Activated T-helper 2 cell treated with anti-CD3 and anti-CD28 coated beads, Interferon-gamma antibody, Interleukin-2, Interleukin-4, amounts not matched to agents 10 μg/mL and 5 μg/mL and 100 μg/mL, durations not matched to agents 14 hours and 24 hours and 36 hours (primary cell): ENCODE measurements at regions of chr4 and their contacts with region 1.

Region 1: DNA sequence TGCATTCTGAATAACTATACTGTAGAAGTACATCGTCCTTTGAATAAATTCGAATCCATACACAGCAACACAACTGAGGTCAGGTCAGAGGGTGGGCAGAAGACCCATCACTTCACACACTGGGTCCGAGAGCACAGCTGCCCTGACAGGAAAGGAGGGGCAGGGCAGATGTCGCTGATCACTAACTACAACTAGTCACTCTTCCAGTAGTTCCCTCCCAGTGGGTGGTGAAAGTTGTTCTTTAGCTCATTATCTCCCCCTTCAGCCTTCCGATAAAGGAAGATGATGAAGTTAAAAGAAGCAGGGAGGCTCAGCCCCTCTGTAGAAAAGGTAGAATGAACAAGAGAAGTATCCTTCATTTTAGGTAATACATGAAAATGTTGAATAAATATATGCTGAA is 278.9 kb downstream of the INPP4B start:
- DNase-seq: peak; percentile 53
- H3K4me3 Mint-ChIP-seq: peak overlapping the region; percentile 88
- H3K27ac Mint-ChIP-seq: peak overlapping the region; percentile 94
- H3K4me1 Mint-ChIP-seq: peaks cover 55% of the 10 kb centered on the region
- H3K27me3 Mint-ChIP-seq: no peaks in the 10 kb centered on the region

Region 2: GRCh38 chr4:141220655-141221605 is 1346.3 kb before region 1 on chr4 and contains the start of gene ZNF330:
- intact Hi-C with region 1: loop called (anchors 10 kb)
- DNase-seq: peak; percentile 82
- H3K4me3 Mint-ChIP-seq: peak within 1 kb of the TSS; percentile 91
- H3K27ac Mint-ChIP-seq: peak within 1 kb of the TSS; percentile 95
- H3K4me1 Mint-ChIP-seq: peaks cover 29% of the 10 kb centered on the region
- H3K27me3 Mint-ChIP-seq: peaks cover 9% of the 10 kb centered on the region
- total RNA-seq, gene ZNF330: 55.3 and 57.9 TPM in 2 replicates

Region 3: DNA sequence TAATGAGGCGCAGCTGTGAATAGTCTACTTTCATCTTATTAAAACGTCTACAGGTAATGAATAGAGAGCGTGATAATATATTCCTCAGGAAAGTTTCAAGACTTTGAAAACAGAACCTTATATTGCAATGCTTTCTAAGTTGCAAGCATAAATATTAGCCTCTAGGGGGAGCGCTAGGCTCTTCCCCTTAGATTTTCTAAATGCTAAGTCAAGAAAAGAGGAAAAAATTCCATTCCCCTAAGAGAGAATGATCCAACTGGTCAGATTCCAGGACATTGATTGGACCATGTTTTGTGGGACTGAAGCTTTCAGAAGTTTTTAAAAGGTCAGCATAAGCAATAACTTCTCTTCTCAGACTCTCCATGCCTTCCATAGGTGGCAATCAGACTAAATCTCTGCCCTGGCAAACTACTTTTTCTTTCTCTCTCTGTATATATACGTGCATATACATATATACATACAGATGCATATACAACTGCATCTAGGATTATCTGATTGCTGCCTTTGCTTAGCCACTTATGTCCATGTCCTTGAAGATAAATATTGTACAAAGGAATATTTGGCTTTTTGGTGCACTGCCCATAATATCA is 214.0 kb before region 1 on chr4:
- intact Hi-C with region 1: loop called (anchors 1 kb)
- DNase-seq: no peak
- H3K4me3 Mint-ChIP-seq: peak overlapping the region; percentile 15
- H3K27ac Mint-ChIP-seq: peak overlapping the region; percentile 88
- H3K4me1 Mint-ChIP-seq: peaks cover 89% of the 10 kb centered on the region
- H3K27me3 Mint-ChIP-seq: no peaks in the 10 kb centered on the region

Region 4: GRCh38 chr4:142405021-142405694 is 162.0 kb before region 1 on chr4:
- intact Hi-C with region 1: loop called (anchors 1 kb)
- DNase-seq: peak; percentile 64
- H3K4me3 Mint-ChIP-seq: peak overlapping the region; percentile 96
- H3K27ac Mint-ChIP-seq: peak overlapping the region; percentile 99
- H3K4me1 Mint-ChIP-seq: peaks cover 45% of the 10 kb centered on the region
- H3K27me3 Mint-ChIP-seq: no peaks in the 10 kb centered on the region

Region 5: GRCh38 chr4:142556048-142556447 is 11.2 kb before region 1 on chr4:
- intact Hi-C with region 1: loop called (anchors 1 kb)
- DNase-seq: no peak
- H3K4me3 Mint-ChIP-seq: peak overlapping the region; percentile 63
- H3K27ac Mint-ChIP-seq: peak overlapping the region; percentile 82
- H3K4me1 Mint-ChIP-seq: peaks cover 67% of the 10 kb centered on the region
- H3K27me3 Mint-ChIP-seq: no peaks in the 10 kb centered on the region

Region 6: DNA sequence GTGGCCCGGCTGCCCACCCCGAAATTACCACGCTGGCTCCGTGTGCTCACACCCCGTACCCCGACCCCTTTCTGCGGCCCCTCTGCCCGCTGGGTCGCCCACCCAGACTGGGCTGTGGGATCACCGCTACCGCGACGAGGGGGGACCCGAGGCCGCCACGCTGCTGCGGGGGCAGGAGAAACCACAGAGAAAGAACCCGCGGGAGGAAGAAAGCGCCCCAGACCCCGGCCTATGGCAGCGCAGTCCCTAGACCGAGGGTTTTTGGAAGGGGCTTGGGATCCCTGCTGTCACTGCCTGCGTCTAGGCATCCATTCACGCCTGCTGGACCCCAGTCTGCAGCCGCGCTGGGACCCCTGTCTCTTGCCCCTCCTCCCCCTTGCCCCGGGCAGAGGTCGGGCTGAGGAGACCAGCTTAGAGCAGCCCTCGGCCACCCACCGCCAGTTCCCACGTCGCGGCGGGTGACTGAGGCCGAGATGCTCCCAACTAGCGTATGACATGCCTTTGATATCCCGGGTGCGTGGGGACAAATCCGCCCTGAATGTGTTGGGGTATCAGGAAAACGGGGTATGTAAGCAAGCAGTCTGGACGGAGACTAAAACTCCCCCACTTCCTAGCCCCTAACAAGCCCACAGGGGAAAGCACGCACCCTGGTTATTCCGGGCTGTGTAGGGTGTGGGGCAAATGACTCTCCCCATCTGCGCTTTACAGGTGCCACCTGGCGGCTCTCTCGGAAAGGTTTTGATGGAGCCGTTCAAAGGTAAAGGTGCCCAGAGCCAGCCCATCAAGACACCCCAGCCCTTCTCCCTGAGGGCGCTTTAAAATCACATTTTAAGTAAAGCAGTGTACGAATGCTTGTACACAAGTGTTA is 279.8 kb after region 1 on chr4:
- intact Hi-C with region 1: loop called (anchors 2 kb)
- DNase-seq: peak; percentile 62
- H3K4me3 Mint-ChIP-seq: peak overlapping the region; percentile 86
- H3K27ac Mint-ChIP-seq: peak overlapping the region; percentile 76
- H3K4me1 Mint-ChIP-seq: peaks cover 26% of the 10 kb centered on the region
- H3K27me3 Mint-ChIP-seq: peaks cover 36% of the 10 kb centered on the region

Region 7: GRCh38 chr4:143346206-143346605 is 779.0 kb after region 1 on chr4:
- intact Hi-C with region 1: no loop called
- DNase-seq: no peak
- H3K4me3 Mint-ChIP-seq: no peak overlapping the region
- H3K27ac Mint-ChIP-seq: no peak overlapping the region
- H3K4me1 Mint-ChIP-seq: no peaks in the 10 kb centered on the region
- H3K27me3 Mint-ChIP-seq: peaks cover 26% of the 10 kb centered on the region